Activated CD4-positive, alpha-beta memory T cell treated with anti-CD3 and anti-CD28 coated beads for 36 hours (primary cell): ENCODE measurements at regions of chr3 and their contacts with region 1.

Region 1: DNA sequence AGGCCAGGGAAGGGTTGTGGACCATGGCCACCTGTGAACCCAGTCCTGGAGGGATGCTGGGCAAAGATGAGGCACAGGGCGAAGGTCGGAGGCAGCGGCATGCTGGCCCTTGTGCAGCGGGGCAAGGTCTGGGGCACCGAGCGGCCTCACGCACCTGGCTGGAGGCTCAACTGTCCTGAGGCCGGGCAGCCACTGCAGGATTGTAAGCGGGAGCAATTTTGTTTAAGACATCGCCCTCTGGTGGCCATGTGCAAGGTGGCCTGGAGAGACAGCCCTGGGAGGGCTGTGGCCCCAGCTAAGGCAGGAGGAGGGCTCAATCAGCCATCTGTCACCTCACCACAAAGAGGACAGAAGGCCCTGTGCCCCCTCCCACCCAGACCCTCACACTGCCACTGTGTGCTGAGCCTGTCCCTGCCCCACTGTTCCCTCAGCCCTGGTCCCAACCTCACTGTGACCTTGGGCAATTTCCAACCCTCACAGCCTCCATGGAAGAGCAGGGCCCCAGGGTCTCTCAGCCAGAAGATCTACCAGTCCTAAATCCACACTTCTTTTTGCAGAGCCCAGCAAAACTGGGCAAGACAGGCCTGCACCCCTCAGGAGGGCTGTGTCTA is 46.2 kb downstream of the TPRA1 start:
- DNase-seq: peak; percentile 77
- H3K4me3 Mint-ChIP-seq: no peak overlapping the region
- H3K27ac Mint-ChIP-seq: no peak overlapping the region
- H3K4me1 Mint-ChIP-seq: peaks cover 11% of the 10 kb centered on the region
- H3K27me3 Mint-ChIP-seq: peaks cover 3% of the 10 kb centered on the region

Region 2: DNA sequence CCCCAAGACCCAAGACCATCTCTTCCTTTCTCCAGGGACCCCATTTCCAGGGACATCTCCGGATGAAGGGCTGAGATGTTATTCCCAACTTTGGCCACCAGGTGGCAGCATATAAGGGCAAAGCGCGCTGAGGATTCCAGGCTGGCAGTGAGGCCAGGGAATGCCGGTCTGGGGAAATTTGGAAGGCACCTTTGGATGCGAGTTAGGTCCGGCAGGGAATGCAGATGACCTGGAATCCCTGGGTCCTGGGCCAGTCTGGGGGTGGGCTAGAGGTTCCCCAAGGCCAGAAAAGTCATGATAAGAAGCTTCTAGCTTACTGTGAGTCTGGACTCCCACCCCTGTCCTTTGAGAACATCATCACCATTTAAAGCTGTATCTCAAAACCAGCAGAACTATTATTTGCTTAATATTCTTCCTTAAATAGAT is 1021.9 kb before region 1 on chr3:
- CTCF ChIA-PET with region 1: interaction called, 25 read pairs
- POLR2A ChIA-PET with region 1: no interaction called
- intact Hi-C with region 1: loop called (anchors 1 kb)
- DNase-seq: peak; percentile 43
- H3K4me3 Mint-ChIP-seq: no peak overlapping the region
- H3K27ac Mint-ChIP-seq: no peak overlapping the region
- H3K4me1 Mint-ChIP-seq: no peaks in the 10 kb centered on the region
- H3K27me3 Mint-ChIP-seq: peaks cover 15% of the 10 kb centered on the region

Region 3: GRCh38 chr3:126679318-126679751 is 865.0 kb before region 1 on chr3:
- CTCF ChIA-PET with region 1: interaction called, 57 read pairs
- POLR2A ChIA-PET with region 1: no interaction called
- intact Hi-C with region 1: loop called (anchors 2 kb)
- DNase-seq: peak; percentile 84
- H3K4me3 Mint-ChIP-seq: peak overlapping the region; percentile 28
- H3K27ac Mint-ChIP-seq: no peak overlapping the region
- H3K4me1 Mint-ChIP-seq: peaks cover 5% of the 10 kb centered on the region
- H3K27me3 Mint-ChIP-seq: peaks cover 13% of the 10 kb centered on the region

Region 4: GRCh38 chr3:127483902-127484591 is 60.2 kb before region 1 on chr3:
- CTCF ChIA-PET with region 1: interaction called, 12 read pairs
- POLR2A ChIA-PET with region 1: interaction called, 3 read pairs
- intact Hi-C with region 1: loop called (anchors 2 kb)
- DNase-seq: peak; percentile 86
- H3K4me3 Mint-ChIP-seq: no peak overlapping the region
- H3K27ac Mint-ChIP-seq: peak overlapping the region; percentile 34
- H3K4me1 Mint-ChIP-seq: peaks cover 23% of the 10 kb centered on the region
- H3K27me3 Mint-ChIP-seq: peaks cover 26% of the 10 kb centered on the region